AG04449 (cell line): ENCODE measurements at regions of chr11 and their contacts with region 1.

Region 1: GRCh38 chr11:113305440-113306336 is 8.7 kb upstream of the TTC12 start:
- DNase-seq: no peak
- H3K4me3 ChIP-seq: no peak overlapping the region
- CTCF ChIP-seq: peak; percentile 95

Region 2: DNA sequence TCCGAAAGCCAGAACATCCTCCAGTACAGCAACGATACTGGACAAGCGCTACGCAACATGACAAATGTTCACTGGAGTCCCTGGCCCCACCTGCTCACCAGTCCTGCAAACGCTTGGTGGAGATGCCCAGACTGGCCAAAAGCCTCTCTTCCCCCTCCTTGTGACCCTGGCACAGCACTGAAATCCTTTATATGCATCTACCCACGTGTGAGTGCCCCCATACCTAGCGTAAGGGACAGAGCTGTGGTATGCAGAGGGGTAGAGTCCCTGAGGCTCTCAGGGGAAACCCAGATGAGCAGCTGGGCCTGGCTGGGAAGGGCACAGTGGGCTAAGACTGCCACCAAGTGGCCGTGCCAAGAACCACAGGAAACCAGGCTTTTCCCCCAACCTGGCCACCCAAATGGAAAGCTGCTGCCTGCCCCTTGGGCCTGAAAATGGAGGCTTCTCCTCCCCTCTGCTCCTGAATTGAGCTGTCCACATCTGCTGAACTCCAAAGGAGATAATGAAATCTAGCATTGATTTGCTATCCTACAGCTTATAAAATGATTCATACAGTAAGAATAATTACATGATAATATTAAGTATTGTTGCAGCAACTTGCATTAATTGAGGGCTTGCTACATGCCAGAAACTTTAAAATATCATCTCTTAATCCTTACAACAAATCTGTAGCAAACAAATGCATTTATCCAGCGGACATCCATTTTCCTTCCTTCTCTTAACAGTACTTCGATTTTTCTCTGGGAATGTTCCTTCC is 16.1 kb before region 1 on chr11:
- CTCF ChIA-PET with region 1: interaction called, 27 read pairs
- POLR2A ChIA-PET with region 1: no interaction called
- DNase-seq: no peak
- H3K4me3 ChIP-seq: no peak overlapping the region
- CTCF ChIP-seq: peak; percentile 94

Region 3: DNA sequence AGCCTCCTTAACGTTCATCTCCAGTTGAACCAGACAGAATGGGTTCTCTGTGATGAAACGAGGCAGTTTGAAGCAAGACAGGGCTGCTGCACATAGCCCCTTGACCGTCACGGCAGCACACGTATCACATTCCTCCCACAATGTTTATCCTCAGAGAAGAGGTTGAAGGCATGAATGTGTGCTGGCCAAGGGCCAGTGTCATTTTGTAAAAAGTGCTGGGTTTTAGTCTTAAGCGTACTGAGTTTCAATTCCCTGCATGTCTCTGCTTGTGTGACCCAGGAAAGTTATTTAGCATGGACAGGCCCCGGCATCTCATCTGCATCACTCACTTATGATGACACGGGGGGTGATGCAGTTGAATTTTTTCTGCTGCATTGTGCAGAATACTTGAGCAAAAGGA is 40.3 kb after region 1 on chr11:
- CTCF ChIA-PET with region 1: no interaction called
- POLR2A ChIA-PET with region 1: no interaction called
- DNase-seq: no peak
- H3K4me3 ChIP-seq: no peak overlapping the region
- CTCF ChIP-seq: no peak

Region 4: DNA sequence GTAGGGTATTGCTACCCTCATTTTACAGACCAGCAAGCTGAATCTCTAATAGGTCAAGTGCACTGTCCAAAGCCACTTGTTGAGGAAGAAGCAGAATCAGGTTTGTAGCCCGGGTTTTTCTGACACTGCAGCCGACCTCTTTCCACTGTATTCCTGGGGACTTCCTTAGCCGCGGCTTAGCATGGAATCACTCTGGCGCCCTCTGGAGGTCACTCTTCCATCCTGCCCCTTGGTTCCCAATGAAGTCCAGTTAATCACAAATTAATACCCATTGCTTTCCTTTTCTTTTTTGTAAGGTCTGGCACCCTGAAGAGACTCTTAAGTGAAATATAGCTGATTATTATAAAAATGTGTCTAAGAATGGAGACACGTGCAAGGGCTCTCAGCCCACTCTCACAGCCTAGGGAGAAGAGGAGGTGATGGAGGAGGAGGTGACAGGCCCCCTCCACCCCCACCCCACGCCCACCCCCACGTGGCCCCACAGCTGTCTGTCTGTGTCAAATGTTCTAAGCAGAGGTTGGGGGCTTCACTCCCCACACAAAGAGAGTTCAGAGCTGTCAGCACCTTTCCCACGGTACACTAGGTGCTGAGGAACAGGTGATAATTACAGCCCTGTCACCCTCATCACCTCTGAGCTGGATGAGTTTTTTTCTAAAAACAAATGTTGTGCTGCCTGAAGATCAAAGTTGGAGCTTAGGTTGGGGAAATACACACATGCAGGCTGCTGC is 227.2 kb after region 1 on chr11:
- CTCF ChIA-PET with region 1: interaction called, 73 read pairs
- POLR2A ChIA-PET with region 1: no interaction called
- DNase-seq: peak; percentile 29
- H3K4me3 ChIP-seq: no peak overlapping the region
- CTCF ChIP-seq: peak; percentile 82

Region 5: GRCh38 chr11:113603277-113604059 is 297.8 kb after region 1 on chr11:
- CTCF ChIA-PET with region 1: no interaction called
- POLR2A ChIA-PET with region 1: no interaction called
- DNase-seq: no peak
- H3K4me3 ChIP-seq: no peak overlapping the region
- CTCF ChIP-seq: no peak

Region 6: DNA sequence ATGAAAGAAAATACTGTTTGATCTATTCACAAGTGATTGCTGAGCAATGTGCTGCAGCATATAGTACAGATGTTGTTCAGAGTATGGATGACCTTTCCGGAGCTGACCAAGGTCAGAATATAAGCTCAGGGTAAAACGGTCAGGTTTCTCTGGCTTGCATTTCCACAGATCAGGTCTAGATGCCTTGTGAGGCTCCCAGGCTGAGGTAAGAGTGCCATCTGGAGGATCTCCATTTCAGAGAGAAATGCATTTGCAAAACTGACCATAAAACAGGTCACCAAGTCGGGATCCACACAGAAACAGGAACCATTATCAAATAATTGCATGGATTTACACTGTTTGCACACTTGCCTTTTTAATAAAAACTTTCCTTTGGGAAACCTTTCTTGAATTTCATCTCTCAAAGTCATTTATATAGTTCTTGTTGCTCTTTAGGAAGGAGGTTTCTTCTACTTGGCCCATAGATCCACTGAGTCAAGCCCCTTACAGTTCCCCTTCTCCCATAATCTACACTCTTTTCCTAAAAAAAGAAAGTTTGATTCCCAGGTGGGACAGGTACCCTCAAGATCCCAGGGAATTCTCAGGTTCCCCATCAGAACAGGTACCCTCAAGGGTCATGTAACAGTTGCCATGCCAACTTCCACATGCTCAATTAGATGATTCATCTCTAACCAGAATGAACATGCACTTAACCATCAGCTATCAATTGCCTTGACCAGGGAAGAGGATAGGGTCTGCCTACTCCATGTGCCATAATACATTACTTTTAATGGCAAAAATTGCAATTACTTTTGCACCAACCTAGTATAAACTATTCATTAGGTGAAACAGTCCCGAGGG is 425.4 kb after region 1 on chr11:
- CTCF ChIA-PET with region 1: interaction called, 104 read pairs
- POLR2A ChIA-PET with region 1: no interaction called
- DNase-seq: peak; percentile 24
- H3K4me3 ChIP-seq: no peak overlapping the region
- CTCF ChIP-seq: peak; percentile 76

Region 7: GRCh38 chr11:113736323-113736722 is 430.6 kb after region 1 on chr11:
- CTCF ChIA-PET with region 1: interaction called, 104 read pairs
- POLR2A ChIA-PET with region 1: no interaction called
- DNase-seq: no peak
- H3K4me3 ChIP-seq: no peak overlapping the region
- CTCF ChIP-seq: no peak

Region 8: DNA sequence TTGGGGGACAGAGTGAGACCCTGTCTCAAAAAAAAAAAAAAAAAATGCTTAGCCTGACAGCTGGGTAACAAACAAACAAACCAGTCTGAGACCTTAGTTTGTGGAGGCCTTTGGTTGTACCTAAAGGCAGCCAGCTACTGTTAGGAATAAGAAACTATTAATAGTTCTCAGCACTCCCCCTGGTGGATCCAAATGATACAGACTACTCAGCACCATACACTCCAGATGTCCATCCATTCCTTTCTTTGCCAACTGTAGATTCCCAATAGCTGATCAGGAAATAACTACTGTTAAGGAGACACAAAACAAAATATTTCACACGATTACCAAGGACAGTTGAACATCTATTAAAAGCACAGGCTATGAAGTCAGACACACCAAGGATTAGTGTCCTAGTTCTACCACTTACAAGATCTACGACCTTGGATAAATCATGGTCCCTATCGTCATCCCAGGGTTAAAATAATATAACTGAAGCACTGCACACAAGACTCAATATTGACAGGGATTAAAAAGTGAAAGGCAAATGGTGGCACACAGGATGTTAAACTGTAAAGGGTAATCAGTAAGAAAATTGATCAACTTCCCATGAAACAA is 491.1 kb after region 1 on chr11:
- CTCF ChIA-PET with region 1: interaction called, 25 read pairs
- POLR2A ChIA-PET with region 1: no interaction called
- DNase-seq: no peak
- H3K4me3 ChIP-seq: no peak overlapping the region
- CTCF ChIP-seq: peak; percentile 62